ENCODE measurements at regions of chr11 and their contacts with region 1.

Region 1: DNA sequence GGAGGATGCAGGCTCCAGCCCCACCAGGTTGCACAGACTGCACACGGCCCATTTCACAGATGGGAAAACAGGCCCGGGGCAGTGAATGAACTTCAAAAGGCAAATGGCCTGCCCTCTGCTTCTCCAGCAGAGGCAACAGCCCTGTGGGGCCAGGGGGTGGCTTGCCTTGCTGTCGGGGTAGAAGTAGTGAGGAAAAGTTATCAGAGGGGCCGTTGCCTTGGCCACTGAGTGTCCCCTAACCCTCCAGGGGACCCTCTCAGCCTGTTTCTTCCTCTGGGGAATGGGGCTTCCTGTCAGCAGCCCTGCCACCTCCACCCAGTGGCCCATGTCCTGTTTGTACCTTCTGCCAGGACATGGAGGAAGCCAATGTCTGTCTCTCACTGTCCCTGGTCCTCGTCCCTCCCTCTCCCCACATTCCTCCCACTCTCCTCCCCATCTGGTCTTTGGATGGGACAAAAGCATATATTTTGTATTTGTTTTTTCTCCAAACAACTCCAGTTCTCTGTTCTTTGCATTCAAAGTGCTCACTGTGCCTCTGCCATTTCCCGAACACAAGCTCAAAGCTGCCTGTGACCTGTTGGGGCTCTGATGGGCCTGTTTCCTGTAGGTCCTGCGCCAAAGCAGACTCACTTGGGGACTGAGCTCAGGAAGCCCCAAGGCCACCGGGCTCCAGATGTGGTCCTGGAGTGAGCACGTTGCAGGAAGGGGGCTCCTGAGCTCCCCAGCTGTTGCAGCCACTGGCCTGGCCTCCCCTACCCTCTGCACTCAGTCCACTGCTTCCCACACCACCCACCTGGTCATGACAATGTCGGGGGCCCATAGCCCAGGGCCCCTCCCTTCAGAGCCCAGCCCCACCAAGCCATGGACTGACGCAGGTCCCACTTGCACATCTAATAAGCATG is 9.5 kb downstream of the MAP4K2 start:
- DNase-seq: no peak
- H3K4me3 ChIP-seq: no peak overlapping the region
- H3K27ac ChIP-seq: no peak overlapping the region
- H3K4me1 ChIP-seq: no peaks in the 10 kb centered on the region
- H3K27me3 ChIP-seq: no peaks in the 10 kb centered on the region
- CTCF ChIP-seq: no peak

Region 2: DNA sequence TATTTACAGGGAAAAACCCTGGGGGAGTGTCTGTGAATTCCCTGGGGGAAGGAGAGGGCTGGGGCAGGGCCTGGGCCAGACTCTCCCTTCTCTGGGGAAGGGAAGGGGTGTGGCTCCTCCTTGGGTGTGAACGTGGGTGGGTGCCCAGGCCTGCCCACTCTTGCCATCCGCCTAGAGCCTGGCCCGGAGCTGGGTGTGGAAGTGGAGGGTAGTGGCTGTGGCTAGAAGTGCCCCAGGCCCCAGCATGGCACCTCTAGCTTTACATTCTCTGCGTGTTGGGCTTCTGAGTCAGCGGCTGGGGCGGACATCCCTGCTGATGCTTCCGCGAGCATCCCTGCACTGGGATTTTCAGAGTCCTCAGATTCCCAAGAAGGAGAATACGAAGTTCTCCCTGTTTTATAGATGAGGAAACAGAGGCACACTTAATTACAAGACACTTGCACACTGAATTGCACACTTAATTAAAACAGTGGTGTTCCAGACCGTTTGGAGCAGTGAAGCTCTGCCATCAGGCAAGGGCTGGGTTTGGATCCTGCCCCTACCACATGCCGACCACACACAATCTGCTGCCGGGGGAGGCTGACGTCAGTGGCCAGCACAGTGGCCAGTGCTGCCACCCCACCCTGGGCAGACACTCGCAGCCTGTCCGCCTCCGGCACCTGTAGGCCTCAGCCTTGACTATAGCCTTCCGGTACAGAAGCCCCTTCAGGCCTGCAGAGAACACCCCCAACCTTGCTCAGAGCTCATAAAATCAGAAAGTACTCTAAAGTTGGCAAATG is 516.7 kb before region 1 on chr11:
- CTCF ChIA-PET with region 1: no interaction called
- dilution Hi-C with region 1: no loop called
- in situ Hi-C with region 1: no loop called
- intact Hi-C with region 1: no loop called
- DNase-seq: peak; percentile 93
- H3K4me3 ChIP-seq: no peak overlapping the region
- H3K27ac ChIP-seq: peak overlapping the region; percentile 22
- H3K4me1 ChIP-seq: peaks cover 20% of the 10 kb centered on the region
- H3K27me3 ChIP-seq: no peaks in the 10 kb centered on the region
- CTCF ChIP-seq: no peak

Region 3: GRCh38 chr11:64553551-64554201 is 239.8 kb before region 1 on chr11:
- CTCF ChIA-PET with region 1: no interaction called
- dilution Hi-C with region 1: no loop called
- in situ Hi-C with region 1: no loop called
- intact Hi-C with region 1: no loop called
- DNase-seq: no peak
- H3K4me3 ChIP-seq: no peak overlapping the region
- H3K27ac ChIP-seq: no peak overlapping the region
- H3K4me1 ChIP-seq: no peaks in the 10 kb centered on the region
- H3K27me3 ChIP-seq: no peaks in the 10 kb centered on the region
- CTCF ChIP-seq: peak; percentile 91 to 97

Region 4: GRCh38 chr11:64826578-64827450 is 33.3 kb after region 1 on chr11:
- CTCF ChIA-PET with region 1: no interaction called
- dilution Hi-C with region 1: no loop called
- in situ Hi-C with region 1: no loop called
- intact Hi-C with region 1: no loop called
- DNase-seq: no peak
- H3K4me3 ChIP-seq: no peak overlapping the region
- H3K27ac ChIP-seq: no peak overlapping the region
- H3K4me1 ChIP-seq: no peaks in the 10 kb centered on the region
- H3K27me3 ChIP-seq: no peaks in the 10 kb centered on the region
- CTCF ChIP-seq: no peak

Region 5: GRCh38 chr11:64947208-64947814 is 153.8 kb after region 1 on chr11:
- CTCF ChIA-PET with region 1: no interaction called
- dilution Hi-C with region 1: loop called (anchors 5 kb)
- in situ Hi-C with region 1: no loop called
- intact Hi-C with region 1: no loop called
- DNase-seq: no peak
- H3K4me3 ChIP-seq: no peak overlapping the region
- H3K27ac ChIP-seq: no peak overlapping the region
- H3K4me1 ChIP-seq: no peaks in the 10 kb centered on the region
- H3K27me3 ChIP-seq: no peaks in the 10 kb centered on the region
- CTCF ChIP-seq: no peak